ENCODE measurements at regions of chr13 and their contacts with region 1.

Region 1: GRCh38 chr13:97221989-97222700 is at the start of gene MBNL2:
- DNase-seq: peak; percentile 97
- H3K4me3 ChIP-seq: peak within 1 kb of the TSS; percentile 59 to 62 (median 61)
- H3K27ac ChIP-seq: peak within 1 kb of the TSS; percentile 88 to 94 (median 92)
- H3K4me1 ChIP-seq: peaks cover 0 to 33% (median 30%) of the 10 kb centered on the region in 4 donors
- H3K27me3 ChIP-seq: no peaks in the 10 kb centered on the region
- CTCF ChIP-seq: no peak
- EP300 ChIP-seq: peak in 3 of 4 donors; percentile 74 to 92 (median 87)
- POLR2A ChIP-seq: peak; percentile 76 to 80
- total RNA-seq, gene MBNL2: 84.7 to 110 (median 95.1) TPM

Region 2: GRCh38 chr13:97116754-97117153 is 105.4 kb before region 1 on chr13:
- intact Hi-C with region 1: loop called (anchors 1 kb)
- DNase-seq: peak; percentile 74
- H3K4me3 ChIP-seq: no peak overlapping the region
- H3K27ac ChIP-seq: peak overlapping the region; percentile 81 to 90 (median 84)
- H3K4me1 ChIP-seq: peaks cover 0 to 89% (median 75%) of the 10 kb centered on the region in 4 donors
- H3K27me3 ChIP-seq: no peaks in the 10 kb centered on the region
- CTCF ChIP-seq: no peak
- EP300 ChIP-seq: peak in 3 of 4 donors; percentile 51 to 83 (median 80)
- POLR2A ChIP-seq: no peak

Region 3: GRCh38 chr13:97280478-97280877 is 58.3 kb after region 1 on chr13:
- intact Hi-C with region 1: loop called (anchors 5 kb)
- DNase-seq: no peak
- H3K4me3 ChIP-seq: no peak overlapping the region
- H3K27ac ChIP-seq: peak overlapping the region; percentile 72 to 89 (median 80)
- H3K4me1 ChIP-seq: peaks cover 0 to 99% (median 91%) of the 10 kb centered on the region in 4 donors
- H3K27me3 ChIP-seq: no peaks in the 10 kb centered on the region
- CTCF ChIP-seq: no peak
- EP300 ChIP-seq: no peak
- POLR2A ChIP-seq: no peak

Region 4: GRCh38 chr13:97339019-97339987 is 117.2 kb after region 1 on chr13:
- intact Hi-C with region 1: loop called (anchors 2 kb)
- DNase-seq: peak; percentile 91
- H3K4me3 ChIP-seq: peak overlapping the region in 1 of 4 donors; percentile 13
- H3K27ac ChIP-seq: peak overlapping the region; percentile 79 to 90 (median 84)
- H3K4me1 ChIP-seq: peaks cover 0 to 81% (median 66%) of the 10 kb centered on the region in 4 donors
- H3K27me3 ChIP-seq: no peaks in the 10 kb centered on the region
- CTCF ChIP-seq: no peak
- EP300 ChIP-seq: no peak
- POLR2A ChIP-seq: no peak

Region 5: GRCh38 chr13:97781891-97782305 is 559.8 kb after region 1 on chr13:
- intact Hi-C with region 1: no loop called
- DNase-seq: no peak
- H3K4me3 ChIP-seq: no peak overlapping the region
- H3K27ac ChIP-seq: no peak overlapping the region
- H3K4me1 ChIP-seq: no peaks in the 10 kb centered on the region
- H3K27me3 ChIP-seq: no peaks in the 10 kb centered on the region
- CTCF ChIP-seq: no peak
- EP300 ChIP-seq: no peak
- POLR2A ChIP-seq: no peak

Measured in sigmoid colon (tissue), 7 donors.